Caco-2 (cell line): ENCODE measurements at regions of chr11 and their contacts with region 1.

Region 1: DNA sequence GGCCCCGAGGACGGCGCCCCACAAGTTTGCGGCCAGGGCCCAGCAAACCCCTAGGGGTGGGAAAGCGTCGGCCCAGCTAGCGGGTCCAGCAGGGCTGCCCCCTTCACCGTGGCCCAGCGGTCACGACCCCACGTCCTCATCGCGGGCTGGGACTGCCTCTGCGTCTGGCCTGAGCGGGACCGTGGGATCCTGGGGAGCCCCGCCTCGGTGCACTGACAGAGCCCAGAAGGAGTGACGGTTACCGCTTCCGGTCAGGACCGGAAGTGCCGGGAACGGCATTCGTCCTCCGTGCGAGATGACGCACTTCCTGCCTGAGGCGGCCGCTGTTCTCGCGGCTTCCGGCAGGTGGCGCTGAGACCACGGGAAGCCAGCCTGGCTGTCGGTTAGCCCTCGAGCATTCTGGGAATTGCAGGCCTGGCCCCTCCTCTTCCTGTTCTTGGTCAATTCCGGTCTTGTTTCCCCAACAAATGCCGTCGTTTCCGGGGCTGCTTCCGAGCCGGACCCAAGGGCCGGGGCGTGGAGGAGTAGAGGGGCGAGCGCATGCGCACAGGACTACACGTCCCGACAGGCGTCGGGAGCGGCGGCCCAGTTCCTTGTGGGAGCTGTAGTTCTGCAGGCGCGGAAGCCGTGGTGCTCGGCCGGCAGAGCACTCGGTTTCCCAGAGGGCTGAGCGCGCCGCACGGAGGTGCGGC is at the start of gene TSSC4:
- DNase-seq: peak; percentile 99 to 100
- H3K4me3 ChIP-seq: peak within 1 kb of the TSS; percentile 100
- H3K4me3 Mint-ChIP-seq: peak within 1 kb of the TSS; percentile 89
- H3K27ac Mint-ChIP-seq: peak within 1 kb of the TSS; percentile 92
- H3K4me1 ChIP-seq: peaks cover 14% of the 10 kb centered on the region
- H3K4me1 Mint-ChIP-seq: no peaks in the 10 kb centered on the region
- H3K27me3 ChIP-seq: no peaks in the 10 kb centered on the region
- H3K27me3 Mint-ChIP-seq: no peaks in the 10 kb centered on the region
- CTCF ChIP-seq: peak; percentile 94 to 97
- total RNA-seq, gene TSSC4: 46.2 and 60.9 TPM in 2 replicates

Region 2: GRCh38 chr11:2305140-2305840 is 94.9 kb before region 1 on chr11:
- CTCF ChIA-PET with region 1: interaction called, 18 read pairs
- POLR2A ChIA-PET with region 1: interaction called, 4 read pairs
- intact Hi-C with region 1: loop called (anchors 1 kb)
- DNase-seq: peak; percentile 84 to 89
- H3K4me3 ChIP-seq: no peak overlapping the region
- H3K4me3 Mint-ChIP-seq: no peak overlapping the region
- H3K27ac Mint-ChIP-seq: no peak overlapping the region
- H3K4me1 ChIP-seq: peaks cover 44% of the 10 kb centered on the region
- H3K4me1 Mint-ChIP-seq: no peaks in the 10 kb centered on the region
- H3K27me3 ChIP-seq: no peaks in the 10 kb centered on the region
- H3K27me3 Mint-ChIP-seq: no peaks in the 10 kb centered on the region
- CTCF ChIP-seq: peak; percentile 89 to 95

Region 3: DNA sequence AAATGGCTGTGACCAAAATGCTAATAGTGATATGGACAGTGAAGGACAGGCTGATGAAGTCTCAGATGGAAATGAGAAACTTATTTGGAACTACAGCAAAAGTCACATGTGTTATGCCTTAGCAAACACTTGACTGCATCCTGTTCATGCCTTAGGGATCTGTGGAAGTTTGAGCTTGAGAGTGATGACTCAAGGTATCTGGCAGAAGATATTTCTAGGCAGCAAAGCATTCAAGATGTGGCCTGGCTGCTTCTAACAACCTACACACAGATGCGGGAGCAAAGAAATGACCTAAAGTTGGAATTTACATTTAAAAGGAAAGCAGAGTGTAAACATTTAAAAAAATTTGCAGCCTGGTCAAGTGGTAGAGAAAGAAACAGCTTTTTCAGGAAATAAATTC is 51.2 kb before region 1 on chr11:
- CTCF ChIA-PET with region 1: no interaction called
- POLR2A ChIA-PET with region 1: no interaction called
- intact Hi-C with region 1: no loop called
- DNase-seq: no peak
- H3K4me3 ChIP-seq: no peak overlapping the region
- H3K4me3 Mint-ChIP-seq: no peak overlapping the region
- H3K27ac Mint-ChIP-seq: no peak overlapping the region
- H3K4me1 ChIP-seq: peaks cover 17% of the 10 kb centered on the region
- H3K4me1 Mint-ChIP-seq: peaks cover 21% of the 10 kb centered on the region
- H3K27me3 ChIP-seq: no peaks in the 10 kb centered on the region
- H3K27me3 Mint-ChIP-seq: peaks cover 6% of the 10 kb centered on the region
- CTCF ChIP-seq: no peak

Region 4: DNA sequence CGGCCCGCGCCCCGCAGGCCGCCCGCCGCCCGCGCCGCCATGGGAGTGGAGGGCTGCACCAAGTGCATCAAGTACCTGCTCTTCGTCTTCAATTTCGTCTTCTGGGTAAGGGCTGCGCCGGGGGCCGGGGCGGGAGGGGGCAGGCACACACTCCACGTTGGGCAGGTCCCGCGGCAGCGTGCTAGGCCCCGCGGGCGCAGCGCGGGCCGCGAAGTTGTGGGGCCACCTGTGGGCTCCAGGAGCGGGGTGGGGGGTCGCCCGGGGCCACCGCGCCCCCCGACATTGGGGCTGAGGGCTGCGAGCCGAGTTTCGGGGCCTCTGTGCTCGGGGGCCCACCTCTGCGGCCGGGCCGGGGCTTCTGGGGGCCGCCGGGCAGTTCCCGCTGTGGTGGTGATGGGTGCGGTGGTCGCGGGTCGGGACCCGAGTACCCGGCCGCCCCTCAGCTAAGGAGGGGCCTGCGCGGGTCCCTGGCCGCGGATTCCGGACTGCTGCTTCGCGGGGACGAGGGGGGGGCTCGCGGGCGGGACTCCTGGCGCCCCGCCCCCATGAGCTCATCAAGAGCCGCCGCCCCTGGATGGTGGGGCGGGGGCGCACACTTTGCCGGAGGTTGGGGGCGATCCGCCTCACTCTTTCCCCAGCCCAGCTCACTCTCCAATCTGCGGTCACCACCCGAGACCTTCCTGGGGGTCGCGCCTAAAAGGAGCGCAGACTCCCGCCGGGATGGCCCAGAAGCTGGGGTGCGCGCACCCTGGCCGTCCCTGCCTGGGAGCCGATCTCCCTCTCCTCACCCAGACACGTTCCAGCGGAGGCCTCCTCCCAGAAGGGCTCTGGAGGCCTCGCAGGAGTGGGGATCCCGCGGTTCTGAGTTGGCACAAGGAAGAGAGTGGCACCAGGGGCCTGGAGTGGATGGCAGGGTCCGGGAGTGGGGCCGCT is 22.4 kb before region 1 on chr11:
- CTCF ChIA-PET with region 1: interaction called, 13 read pairs
- POLR2A ChIA-PET with region 1: interaction called, 35 read pairs
- intact Hi-C with region 1: loop called (anchors 1 kb)
- DNase-seq: peak in 1 of 2 experiments; percentile 61
- H3K4me3 ChIP-seq: peak overlapping the region; percentile 72
- H3K4me3 Mint-ChIP-seq: peak overlapping the region; percentile 85
- H3K27ac Mint-ChIP-seq: peak overlapping the region; percentile 69
- H3K4me1 ChIP-seq: peaks cover 20% of the 10 kb centered on the region
- H3K4me1 Mint-ChIP-seq: peaks cover 7% of the 10 kb centered on the region
- H3K27me3 ChIP-seq: no peaks in the 10 kb centered on the region
- H3K27me3 Mint-ChIP-seq: no peaks in the 10 kb centered on the region
- CTCF ChIP-seq: no peak

Region 5: DNA sequence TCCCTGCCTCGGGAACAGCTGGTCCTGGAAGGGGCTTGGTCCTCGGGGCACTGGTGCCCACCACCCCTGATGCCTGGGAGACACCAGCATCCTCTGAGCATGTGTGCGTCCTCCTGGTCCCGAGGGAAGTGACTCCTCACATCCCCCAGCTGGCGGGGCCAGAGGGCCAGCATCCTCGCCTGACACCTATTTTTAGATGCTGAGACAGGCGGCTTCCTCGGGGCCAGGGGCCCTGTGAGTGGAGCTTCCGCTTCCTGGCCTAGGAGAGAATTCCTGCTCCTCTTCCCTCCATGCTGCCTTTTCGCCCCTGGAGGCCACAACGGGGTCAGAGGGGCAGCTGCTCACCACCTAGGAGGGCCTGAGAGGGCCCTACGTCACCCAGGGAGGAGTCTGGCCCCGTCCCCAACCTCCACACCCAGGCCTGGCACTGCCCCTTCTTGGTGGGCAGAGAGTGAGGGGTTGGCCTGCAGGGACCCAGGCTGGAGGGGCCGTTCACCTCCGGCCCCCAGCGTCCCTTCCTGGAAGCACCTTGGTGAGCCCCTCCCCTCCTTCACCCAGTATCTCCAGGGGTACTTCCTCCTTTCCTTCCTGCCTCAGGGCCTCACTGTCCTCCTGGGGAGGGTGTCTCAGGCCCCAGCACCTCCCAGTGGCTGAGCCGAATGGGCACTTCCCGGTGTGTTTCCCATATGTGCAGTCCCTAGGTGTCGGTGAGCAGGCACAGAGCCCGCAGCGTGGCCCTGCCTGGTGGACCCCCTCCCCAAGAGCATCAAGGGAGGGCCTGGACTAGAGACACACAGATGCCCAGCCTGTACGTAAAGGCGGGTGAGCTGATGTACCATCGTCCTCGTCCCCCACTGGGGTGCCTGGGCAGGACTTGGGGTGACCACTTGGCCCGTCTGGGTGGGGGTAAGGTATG is 17.0 kb before region 1 on chr11:
- CTCF ChIA-PET with region 1: interaction called, 13 read pairs
- POLR2A ChIA-PET with region 1: interaction called, 35 read pairs
- intact Hi-C with region 1: loop called (anchors 1 kb)
- DNase-seq: no peak
- H3K4me3 ChIP-seq: no peak overlapping the region
- H3K4me3 Mint-ChIP-seq: no peak overlapping the region
- H3K27ac Mint-ChIP-seq: no peak overlapping the region
- H3K4me1 ChIP-seq: 0 out of 2 replicates have a peak, but pooled peaks cover 7% of the 10 kb centered on the region
- H3K4me1 Mint-ChIP-seq: no peaks in the 10 kb centered on the region
- H3K27me3 ChIP-seq: no peaks in the 10 kb centered on the region
- H3K27me3 Mint-ChIP-seq: no peaks in the 10 kb centered on the region
- CTCF ChIP-seq: no peak

Region 6: DNA sequence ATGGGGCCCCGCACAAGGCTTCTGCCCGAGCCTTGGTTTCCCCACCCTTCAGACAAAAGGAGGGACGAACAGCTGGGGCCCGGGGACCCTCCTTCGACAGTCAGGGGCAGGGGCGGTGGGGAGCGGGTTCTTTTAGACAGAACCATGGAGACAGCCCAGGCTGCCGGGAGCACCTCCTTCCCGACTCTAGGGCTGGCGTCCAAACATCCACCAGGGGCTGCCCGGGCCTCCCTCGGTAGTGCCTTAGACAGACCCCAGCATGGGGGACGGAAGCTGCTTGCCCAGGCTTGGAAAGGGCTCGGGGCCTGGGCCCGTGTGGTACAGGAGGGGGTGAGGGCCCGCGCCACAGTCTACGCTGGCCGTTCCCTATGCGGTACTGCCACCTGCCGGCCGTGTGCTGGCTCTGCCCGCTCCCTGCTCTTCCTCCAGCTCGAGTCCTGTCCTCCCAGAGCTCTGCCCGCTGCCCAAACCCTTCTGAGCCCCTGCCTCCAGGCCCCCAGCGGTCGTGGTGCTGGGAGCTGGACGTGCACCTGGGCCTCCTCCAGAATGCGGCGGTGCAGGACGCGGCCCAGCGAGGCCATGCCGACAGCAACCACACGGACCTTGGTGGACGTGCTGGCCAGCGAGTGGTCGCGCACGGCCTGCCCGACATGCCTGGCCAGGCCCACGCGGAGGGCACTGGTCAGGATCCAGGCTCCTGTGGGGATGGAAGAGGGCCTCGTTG is 20.4 kb after region 1 on chr11:
- CTCF ChIA-PET with region 1: interaction called, 14 read pairs
- POLR2A ChIA-PET with region 1: interaction called, 6 read pairs
- intact Hi-C with region 1: loop called (anchors 1 kb)
- DNase-seq: peak; percentile 65 to 82
- H3K4me3 ChIP-seq: no peak overlapping the region
- H3K4me3 Mint-ChIP-seq: no peak overlapping the region
- H3K27ac Mint-ChIP-seq: no peak overlapping the region
- H3K4me1 ChIP-seq: peaks cover 4% of the 10 kb centered on the region
- H3K4me1 Mint-ChIP-seq: no peaks in the 10 kb centered on the region
- H3K27me3 ChIP-seq: no peaks in the 10 kb centered on the region
- H3K27me3 Mint-ChIP-seq: no peaks in the 10 kb centered on the region
- CTCF ChIP-seq: peak; percentile 91 to 96

Region 7: GRCh38 chr11:2590965-2591754 is 190.9 kb after region 1 on chr11:
- CTCF ChIA-PET with region 1: no interaction called
- POLR2A ChIA-PET with region 1: no interaction called
- intact Hi-C with region 1: no loop called
- DNase-seq: no peak
- H3K4me3 ChIP-seq: no peak overlapping the region
- H3K4me3 Mint-ChIP-seq: no peak overlapping the region
- H3K27ac Mint-ChIP-seq: no peak overlapping the region
- H3K4me1 ChIP-seq: no peaks in the 10 kb centered on the region
- H3K4me1 Mint-ChIP-seq: no peaks in the 10 kb centered on the region
- H3K27me3 ChIP-seq: no peaks in the 10 kb centered on the region; the same call in 1 of the 2 replicates
- H3K27me3 Mint-ChIP-seq: peaks cover 13% of the 10 kb centered on the region
- CTCF ChIP-seq: no peak

Region 8: GRCh38 chr11:3014057-3014938 is 614.1 kb after region 1 on chr11:
- CTCF ChIA-PET with region 1: no interaction called
- POLR2A ChIA-PET with region 1: interaction called, 10 read pairs
- intact Hi-C with region 1: no loop called
- DNase-seq: no peak
- H3K4me3 ChIP-seq: no peak overlapping the region
- H3K4me3 Mint-ChIP-seq: no peak overlapping the region
- H3K27ac Mint-ChIP-seq: no peak overlapping the region
- H3K4me1 ChIP-seq: no peaks in the 10 kb centered on the region
- H3K4me1 Mint-ChIP-seq: no peaks in the 10 kb centered on the region
- H3K27me3 ChIP-seq: no peaks in the 10 kb centered on the region
- H3K27me3 Mint-ChIP-seq: no peaks in the 10 kb centered on the region
- CTCF ChIP-seq: no peak